ENCODE measurements at regions of chr19 and their contacts with region 1.

Region 1: GRCh38 chr19:14479975-14480699 is 5.0 kb upstream of the PTGER1 start:
- DNase-seq: peak; percentile 87
- CTCF ChIP-seq: peak; percentile 98

Region 2: GRCh38 chr19:14432791-14433553 is 47.2 kb before region 1 on chr19 and contains the start of gene PKN1:
- CTCF ChIA-PET with region 1: interaction called, 13 read pairs
- POLR2A ChIA-PET with region 1: no interaction called
- DNase-seq: peak; percentile 90
- CTCF ChIP-seq: no peak

Region 3: GRCh38 chr19:14440049-14440448 is 40.1 kb before region 1 on chr19:
- CTCF ChIA-PET with region 1: interaction called, 13 read pairs
- POLR2A ChIA-PET with region 1: no interaction called
- DNase-seq: peak; percentile 90
- CTCF ChIP-seq: no peak

Region 4: DNA sequence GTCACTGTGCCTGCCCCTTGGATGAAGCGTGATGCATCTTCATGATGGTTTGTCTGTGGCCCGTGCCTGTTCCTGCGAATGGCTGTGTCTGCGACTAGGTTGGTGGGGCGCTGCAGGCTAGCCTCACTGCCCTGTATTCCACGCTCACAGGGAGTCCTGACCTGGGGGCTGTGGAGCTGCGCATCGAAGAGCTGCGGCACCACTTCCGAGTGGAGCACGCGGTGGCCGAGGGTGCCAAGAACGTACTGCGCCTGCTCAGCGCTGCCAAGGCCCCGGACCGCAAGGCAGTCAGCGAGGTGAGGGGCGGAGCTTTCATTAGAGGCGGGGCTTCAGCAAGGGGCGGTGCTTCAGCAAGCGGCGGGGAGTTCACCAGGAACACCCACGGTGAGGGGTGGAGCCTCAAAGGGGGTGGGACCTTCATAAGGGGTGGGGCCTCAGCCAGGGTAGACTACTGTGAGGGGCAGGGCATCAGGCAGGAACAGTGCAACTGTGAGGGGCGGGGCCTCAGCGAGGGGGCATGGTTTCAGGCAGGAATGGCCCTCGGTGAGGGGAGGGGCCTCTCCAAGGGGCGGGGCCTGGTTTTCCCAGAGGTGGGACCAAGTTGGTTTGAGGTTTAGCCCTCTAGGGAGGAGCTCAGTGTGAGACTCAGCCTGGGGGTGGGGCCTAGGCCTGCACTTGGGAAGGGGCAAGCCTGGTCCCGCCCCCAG is 29.8 kb before region 1 on chr19:
- CTCF ChIA-PET with region 1: interaction called, 14 read pairs
- POLR2A ChIA-PET with region 1: no interaction called
- DNase-seq: peak; percentile 73
- CTCF ChIP-seq: no peak

Region 5: GRCh38 chr19:14496028-14496833 is 16.1 kb after region 1 on chr19 and contains the start of gene GIPC1:
- CTCF ChIA-PET with region 1: interaction called, 43 read pairs
- POLR2A ChIA-PET with region 1: no interaction called
- DNase-seq: peak; percentile 98
- CTCF ChIP-seq: no peak

Measured in GM10248 (cell line).